Activated B cell treated with CpG ODN at 0.5 μM for 24 hours (primary cell): ENCODE measurements at regions of chr14 and their contacts with region 1.

Region 1: DNA sequence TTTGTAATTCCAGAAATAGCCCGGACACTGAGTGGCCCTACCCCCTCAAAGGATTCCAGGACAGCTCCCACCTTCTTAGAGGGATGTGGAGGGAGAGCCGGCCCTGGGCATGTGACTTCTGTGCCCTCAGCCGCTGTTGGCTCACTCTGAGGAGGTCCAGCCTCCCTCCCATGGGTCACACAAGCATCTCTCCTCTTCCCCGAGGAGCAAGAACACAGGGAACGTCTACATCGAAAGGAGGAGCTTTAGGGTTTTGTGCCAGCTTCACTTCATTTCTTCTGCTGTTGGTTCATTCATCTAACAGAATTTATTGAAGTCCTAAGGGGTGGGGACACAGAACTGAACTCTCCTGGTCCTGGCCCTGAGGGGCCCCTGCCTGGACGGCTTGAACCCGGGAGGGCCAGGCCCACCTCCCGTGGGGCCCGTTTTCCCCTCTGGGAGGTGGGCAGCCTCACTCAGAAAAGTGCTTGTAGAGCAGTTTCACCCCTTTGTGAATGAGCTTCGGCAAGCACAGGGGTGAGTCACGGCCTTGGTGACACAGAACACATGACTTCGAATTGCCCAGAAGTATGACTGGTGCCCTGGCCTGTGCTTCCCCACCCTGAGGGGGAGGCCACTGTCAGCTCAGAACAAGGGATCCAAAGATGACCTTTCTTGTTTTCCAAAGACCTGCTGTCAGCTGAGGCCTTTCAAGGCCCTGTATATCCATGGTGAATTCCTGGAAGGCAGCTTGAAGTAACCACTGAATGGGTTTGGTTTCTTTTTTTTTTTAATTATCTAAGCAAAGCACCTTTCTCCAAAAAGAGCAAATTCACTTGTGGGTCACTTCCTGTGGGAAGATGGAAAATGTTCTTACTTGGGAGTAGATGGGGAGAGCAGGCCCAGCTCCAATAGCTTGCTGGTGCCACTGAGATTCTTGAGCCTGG is 39.2 kb downstream of the NFKBIA start:
- DNase-seq: no peak
- ATAC-seq: peak; percentile 82
- H3K4me3 Mint-ChIP-seq: peak overlapping the region; percentile 8
- H3K27ac Mint-ChIP-seq: peak overlapping the region; percentile 59
- H3K4me1 Mint-ChIP-seq: peaks cover 41% of the 10 kb centered on the region
- H3K27me3 Mint-ChIP-seq: no peaks in the 10 kb centered on the region
- CTCF ChIP-seq: no peak

Region 2: DNA sequence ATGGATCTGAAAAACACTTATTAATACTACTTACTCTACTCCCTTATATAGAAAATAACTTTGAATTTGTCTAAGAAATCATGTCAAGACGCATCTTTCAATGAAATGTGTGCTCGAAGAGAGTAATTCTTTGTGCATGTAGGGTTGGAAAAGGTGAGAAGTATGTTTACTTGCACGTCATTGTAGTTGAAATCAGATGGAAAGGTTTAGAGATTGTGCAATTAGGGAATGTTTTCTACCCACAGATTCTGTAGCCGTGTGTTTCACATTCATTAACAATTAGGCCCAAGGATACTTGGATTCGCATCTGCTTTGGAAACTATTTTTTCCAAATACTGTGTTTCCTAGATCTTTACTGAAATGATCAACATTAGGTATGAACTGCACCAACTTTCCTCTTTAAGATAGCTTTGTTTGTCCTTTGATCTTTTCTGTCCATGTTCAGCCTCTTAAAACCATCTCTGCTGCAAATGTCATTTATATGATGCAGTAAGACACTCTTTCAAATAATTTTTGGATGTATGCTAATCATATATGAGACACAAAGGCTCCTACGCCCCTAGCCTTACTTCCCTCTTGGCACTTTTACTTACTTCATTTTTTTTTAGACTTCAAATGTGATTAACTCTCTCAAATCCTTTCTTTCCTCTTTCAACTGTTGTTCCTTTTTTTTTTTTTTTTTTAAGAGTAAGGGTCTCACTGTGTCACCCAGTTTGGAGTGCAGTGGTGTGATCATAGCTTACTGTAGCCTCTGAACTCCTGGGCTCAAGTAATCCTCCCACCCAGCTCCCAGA is 131.2 kb before region 1 on chr14:
- CTCF ChIA-PET with region 1: no interaction called
- POLR2A ChIA-PET with region 1: no interaction called
- intact Hi-C with region 1: no loop called
- DNase-seq: no peak
- ATAC-seq: no peak
- H3K4me3 Mint-ChIP-seq: no peak overlapping the region
- H3K27ac Mint-ChIP-seq: no peak overlapping the region
- H3K4me1 Mint-ChIP-seq: peaks cover 5% of the 10 kb centered on the region
- H3K27me3 Mint-ChIP-seq: no peaks in the 10 kb centered on the region
- CTCF ChIP-seq: no peak

Region 3: GRCh38 chr14:35331605-35332516 is 33.5 kb before region 1 on chr14:
- CTCF ChIA-PET with region 1: no interaction called
- POLR2A ChIA-PET with region 1: interaction called, 8 read pairs
- intact Hi-C with region 1: loop called (anchors 2 kb)
- DNase-seq: no peak
- ATAC-seq: peak; percentile 66
- H3K4me3 Mint-ChIP-seq: peak overlapping the region; percentile 52
- H3K27ac Mint-ChIP-seq: peak overlapping the region; percentile 51
- H3K4me1 Mint-ChIP-seq: peaks cover 25% of the 10 kb centered on the region
- H3K27me3 Mint-ChIP-seq: no peaks in the 10 kb centered on the region
- CTCF ChIP-seq: no peak